HAP-1 (cell line): ENCODE measurements at regions of chr18 and their contacts with region 1.

Region 1: GRCh38 chr18:70454704-70455322 is 166.0 kb downstream of the SOCS6 start:
- DNase-seq: peak; percentile 63 to 71
- H3K4me3 ChIP-seq: no peak overlapping the region
- H3K4me1 ChIP-seq: peaks cover 10% of the 10 kb centered on the region
- H3K27me3 ChIP-seq: no peaks in the 10 kb centered on the region

Region 2: DNA sequence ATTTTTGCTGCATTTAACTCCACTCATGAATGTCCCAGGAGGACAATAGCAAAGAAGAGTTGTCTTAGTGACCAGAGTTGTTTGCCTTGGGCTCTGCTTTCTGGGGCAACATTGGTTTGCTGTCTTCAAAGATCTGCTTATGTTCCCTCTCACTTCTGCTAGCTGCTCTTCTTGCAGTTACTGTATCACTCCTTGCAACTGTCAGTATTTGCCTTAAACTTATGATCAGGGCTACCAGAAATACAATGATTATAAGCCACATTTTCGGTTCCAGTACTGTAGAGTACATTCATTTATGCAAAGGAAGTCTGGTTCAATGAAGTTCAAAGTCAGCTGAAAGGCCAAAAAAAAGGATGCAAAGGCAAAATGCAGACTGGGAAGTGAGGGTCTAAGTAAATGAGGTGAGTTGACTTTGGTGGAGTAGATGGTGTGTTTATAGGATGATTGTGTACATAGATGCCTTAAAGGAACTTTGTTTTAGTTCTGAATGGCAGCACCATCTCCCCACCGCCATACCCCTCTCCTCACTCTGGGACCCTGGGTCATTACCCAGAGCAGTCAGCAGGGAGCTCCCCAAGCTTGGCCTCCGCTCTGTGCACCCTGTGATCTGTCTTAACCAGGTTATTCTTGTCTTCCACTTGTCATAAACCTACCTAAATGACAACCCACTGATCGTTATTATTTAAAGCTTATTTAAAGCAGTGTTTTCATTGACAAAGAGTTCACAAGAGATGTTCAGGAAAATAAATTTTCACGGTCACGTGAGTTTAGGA is 818.1 kb before region 1 on chr18:
- in situ Hi-C with region 1: loop called (anchors 25 kb)
- DNase-seq: peak; percentile 34 to 65
- H3K4me3 ChIP-seq: no peak overlapping the region
- H3K4me1 ChIP-seq: peaks cover 6% of the 10 kb centered on the region
- H3K27me3 ChIP-seq: no peaks in the 10 kb centered on the region

Region 3: DNA sequence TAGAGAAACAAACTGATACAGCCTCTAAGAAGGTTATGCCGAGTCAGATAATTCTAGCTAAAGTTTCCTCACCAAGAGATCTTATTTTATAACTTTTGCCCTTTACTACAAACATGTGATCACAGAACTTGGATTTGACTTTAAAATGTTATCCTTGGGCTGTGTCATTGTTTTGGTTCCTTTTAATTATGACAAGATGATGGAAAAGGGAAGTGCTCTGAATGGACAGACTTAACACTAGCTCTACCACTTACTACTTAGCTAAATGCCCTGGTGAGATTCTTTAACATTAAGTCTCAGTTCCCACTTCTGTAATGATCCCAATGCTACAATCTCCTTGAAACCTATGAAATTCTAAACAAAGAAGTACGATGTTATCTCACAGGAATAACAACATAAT is 319.2 kb before region 1 on chr18:
- in situ Hi-C with region 1: no loop called
- DNase-seq: no peak
- H3K4me3 ChIP-seq: no peak overlapping the region
- H3K4me1 ChIP-seq: no peaks in the 10 kb centered on the region
- H3K27me3 ChIP-seq: no peaks in the 10 kb centered on the region

Region 4: DNA sequence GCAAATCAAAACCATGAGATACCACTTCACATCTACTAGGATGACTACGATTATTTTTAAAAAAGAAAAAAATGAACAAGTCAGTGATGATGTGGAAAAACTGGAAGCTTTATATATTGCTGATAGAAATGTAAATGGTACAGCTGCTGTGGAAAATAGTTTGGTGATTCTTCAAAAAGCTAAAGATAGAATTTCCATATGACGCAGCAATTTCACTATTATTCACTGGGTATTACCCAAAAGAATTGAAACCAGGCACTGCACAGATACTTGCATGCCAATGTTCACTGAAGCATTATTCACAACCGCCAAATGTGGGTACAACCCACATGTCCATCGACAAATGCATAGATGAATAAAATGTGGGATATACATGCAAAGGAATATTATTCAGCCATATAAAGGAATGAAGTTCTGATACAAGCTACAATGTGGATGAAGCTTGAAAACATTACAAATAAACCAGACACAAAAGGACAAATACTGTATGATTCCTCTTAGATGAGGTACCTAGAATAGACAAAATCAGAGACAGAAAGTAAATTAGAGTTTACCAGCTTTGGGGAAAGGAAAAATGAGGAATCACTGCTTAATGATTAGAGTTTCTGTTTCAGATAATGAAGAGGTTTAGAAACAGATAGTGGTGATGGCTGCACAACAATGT is 260.5 kb before region 1 on chr18:
- in situ Hi-C with region 1: loop called (anchors 5 kb)
- DNase-seq: no peak
- H3K4me3 ChIP-seq: no peak overlapping the region
- H3K4me1 ChIP-seq: no peaks in the 10 kb centered on the region
- H3K27me3 ChIP-seq: no peaks in the 10 kb centered on the region